ENCODE measurements at regions of chr19 and their contacts with region 1.

Region 1: DNA sequence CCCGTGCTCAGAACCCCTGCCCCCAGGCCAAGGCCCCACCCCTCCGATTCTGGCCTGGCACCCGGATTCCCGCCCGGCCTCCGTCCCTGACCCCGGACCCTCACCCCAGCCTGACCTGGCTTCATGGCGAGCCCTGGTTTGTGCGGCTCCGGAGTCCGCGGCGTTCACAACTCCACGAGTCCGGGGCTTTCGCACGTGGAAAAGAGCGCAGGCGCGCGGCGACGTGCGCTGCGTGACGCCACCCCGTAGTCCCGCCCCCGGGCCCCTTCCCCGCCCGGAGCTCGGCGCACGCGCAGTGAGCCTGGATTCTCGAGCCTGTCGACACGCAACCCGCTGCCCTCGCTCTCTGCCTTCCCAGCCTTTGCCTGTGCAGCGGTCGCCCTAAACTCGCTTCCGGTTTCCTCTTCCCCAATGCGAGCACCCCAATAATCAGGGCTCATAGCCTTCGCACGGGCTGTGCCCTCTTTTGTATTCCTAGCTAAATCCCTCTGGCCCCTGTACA is at the start of gene FBL:
- DNase-seq: peak; percentile 90 to 96
- H3K4me3 ChIP-seq: peak within 1 kb of the TSS; percentile 78 to 92 (median 83)
- H3K27ac ChIP-seq: peak within 1 kb of the TSS; percentile 87
- H3K4me1 ChIP-seq: peaks cover 7 to 12% of the 10 kb centered on the region in 2 donors
- H3K27me3 ChIP-seq: no peaks in the 10 kb centered on the region
- CTCF ChIP-seq: no peak
- POLR2A ChIP-seq: peak; percentile 38
- total RNA-seq, gene FBL: 111 to 217 (median 145) TPM

Region 2: DNA sequence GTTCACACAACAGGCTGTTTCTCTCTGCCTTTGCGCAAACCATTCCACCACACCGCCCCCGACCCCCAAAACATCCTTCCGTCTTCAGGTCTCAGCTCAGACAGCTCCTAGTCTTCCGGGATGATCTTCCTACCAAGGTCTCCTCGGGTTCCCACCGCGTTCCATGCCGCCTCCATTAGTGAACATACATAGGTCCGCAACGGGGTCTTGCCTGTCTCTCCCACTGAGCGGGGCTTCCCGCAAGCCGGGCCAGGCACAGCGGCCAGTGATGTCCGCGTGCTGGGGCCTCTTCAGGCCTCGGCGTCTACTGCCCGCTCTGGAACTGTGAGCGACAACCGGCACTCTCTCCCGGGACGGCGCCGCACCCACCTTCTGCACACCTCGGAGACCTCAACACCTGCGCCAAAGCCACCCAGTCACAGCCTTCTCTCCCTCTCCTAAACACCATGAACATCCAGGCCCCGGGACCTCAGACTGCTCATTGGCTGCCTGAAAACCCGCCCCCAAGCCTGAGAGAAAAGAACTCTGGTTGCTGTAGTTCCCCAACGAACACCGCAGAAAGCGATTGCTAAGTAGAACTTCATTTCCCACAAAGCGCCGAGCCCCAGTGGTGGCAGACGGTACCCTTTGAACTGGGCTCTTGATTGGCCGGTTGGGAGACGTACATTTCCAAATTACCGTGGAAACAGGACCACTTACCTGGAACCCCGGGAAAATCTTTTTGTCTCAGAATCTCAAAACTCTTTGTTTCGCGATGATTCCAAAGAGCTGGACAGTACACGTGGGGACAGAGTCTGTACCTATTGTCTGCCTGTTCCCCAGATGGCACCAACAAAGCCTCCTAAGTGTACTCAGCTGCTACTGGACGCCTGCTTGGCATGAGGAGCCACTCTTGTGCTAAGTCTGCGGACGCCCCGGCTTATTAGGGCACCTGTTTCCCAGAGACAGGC is 21.8 kb before region 1 on chr19:
- intact Hi-C with region 1: no loop called
- DNase-seq: peak; percentile 88 to 90
- H3K4me3 ChIP-seq: peak overlapping the region; percentile 60 to 81 (median 75)
- H3K27ac ChIP-seq: peak overlapping the region; percentile 77 to 78
- H3K4me1 ChIP-seq: no peaks in the 10 kb centered on the region
- H3K27me3 ChIP-seq: no peaks in the 10 kb centered on the region
- CTCF ChIP-seq: peak in 1 of 3 donors; percentile 43
- POLR2A ChIP-seq: no peak

Region 3: DNA sequence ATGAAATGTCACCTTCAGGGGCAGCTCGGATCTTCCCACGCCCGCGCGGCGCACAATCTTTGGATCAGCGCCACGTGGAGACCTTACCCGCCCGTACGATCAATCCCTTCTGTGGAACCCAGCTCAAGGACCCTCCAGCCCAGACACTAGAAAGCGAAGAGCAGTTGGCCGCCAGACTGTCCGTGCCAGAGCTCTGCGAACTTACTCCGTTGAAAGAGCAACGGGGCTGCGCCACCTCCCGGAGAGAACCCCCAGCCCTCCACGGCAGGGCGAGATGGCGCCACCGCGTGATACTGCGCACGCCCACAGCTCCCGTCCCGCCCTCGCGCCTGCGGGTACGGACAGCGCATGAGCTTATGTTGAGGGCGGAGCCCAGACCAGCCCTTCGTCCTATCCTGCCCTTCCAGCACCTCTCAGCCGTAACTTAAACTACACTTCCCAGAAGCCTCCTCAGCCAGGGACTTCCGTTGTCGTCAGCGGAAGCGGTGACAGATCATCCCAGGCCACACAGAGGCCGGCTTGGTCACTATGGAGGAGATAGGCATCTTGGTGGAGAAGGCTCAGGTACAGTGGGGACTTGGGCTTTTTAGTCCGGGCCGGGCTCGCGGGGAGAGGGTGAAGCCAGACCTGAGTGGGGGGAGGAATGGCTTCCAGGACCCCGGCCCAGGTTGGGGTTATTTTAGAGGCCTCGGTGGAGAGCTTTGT is 124.6 kb after region 1 on chr19 and contains the start of gene PSMC4:
- intact Hi-C with region 1: loop called (anchors 5 kb)
- DNase-seq: peak; percentile 97 to 98
- H3K4me3 ChIP-seq: peak within 1 kb of the TSS; percentile 85 to 97 (median 87)
- H3K27ac ChIP-seq: peak within 1 kb of the TSS; percentile 95 to 96
- H3K4me1 ChIP-seq: peaks cover 0 to 9% of the 10 kb centered on the region in 2 donors
- H3K27me3 ChIP-seq: no peaks in the 10 kb centered on the region
- CTCF ChIP-seq: peak; percentile 53 to 77 (median 55)
- POLR2A ChIP-seq: peak; percentile 60
- total RNA-seq, gene PSMC4: 61.4 to 71.0 (median 70.8) TPM

Measured in breast epithelium (tissue), 4 donors.